MCF 10A (cell line): ENCODE measurements at regions of chr4 and their contacts with region 1.

Region 1: GRCh38 chr4:111631215-111631999 is 513.8 kb upstream of the FAM241A start:
- DNase-seq: peak; percentile 34
- H3K4me3 Mint-ChIP-seq: no peak overlapping the region
- H3K27ac Mint-ChIP-seq: no peak overlapping the region
- H3K4me1 Mint-ChIP-seq: no peaks in the 10 kb centered on the region
- H3K27me3 Mint-ChIP-seq: peaks cover 47% of the 10 kb centered on the region
- CTCF ChIP-seq: peak; percentile 29

Region 2: DNA sequence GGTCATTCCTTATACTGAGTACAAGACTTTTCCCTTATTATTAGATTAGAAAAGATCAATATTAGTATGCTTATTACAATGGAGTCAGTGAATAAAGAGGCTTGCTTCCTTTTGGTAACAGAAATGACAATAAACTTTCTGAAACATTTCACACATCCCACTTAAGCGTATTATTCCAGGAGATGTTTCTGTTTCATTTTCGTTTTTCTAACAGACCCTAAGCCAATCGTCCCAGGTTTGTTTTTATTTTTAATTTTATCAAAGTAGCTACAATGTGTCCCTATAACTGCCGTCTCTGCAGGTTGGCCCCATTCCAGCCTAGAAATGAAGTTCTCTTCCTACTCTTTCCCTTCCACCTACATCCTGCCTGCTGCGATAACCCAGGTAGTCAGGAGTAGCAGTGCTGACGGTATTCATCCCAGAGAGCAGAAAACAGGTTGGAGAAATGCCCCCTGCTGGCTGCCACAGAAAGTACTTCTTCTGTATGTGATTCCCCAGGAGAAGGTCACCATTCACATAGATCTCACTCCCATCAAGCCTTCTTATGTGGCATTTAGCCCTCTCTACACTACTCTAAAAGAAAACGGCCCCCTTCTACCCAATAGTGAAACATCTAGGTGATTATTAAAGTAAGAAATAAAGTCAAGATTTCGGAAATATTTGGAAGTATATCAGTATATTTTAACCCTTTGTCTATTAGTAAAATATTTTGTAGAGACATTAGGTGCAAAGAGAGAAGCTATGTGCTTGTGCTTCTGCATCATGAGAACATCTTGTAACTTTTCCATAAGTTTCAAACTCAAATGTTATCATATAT is 1115.1 kb before region 1 on chr4:
- CTCF ChIA-PET with region 1: interaction called, 3 read pairs
- POLR2A ChIA-PET with region 1: no interaction called
- intact Hi-C with region 1: loop called (anchors 5 kb)
- DNase-seq: peak; percentile 88
- H3K4me3 Mint-ChIP-seq: peak overlapping the region; percentile 80
- H3K27ac Mint-ChIP-seq: peak overlapping the region; percentile 75
- H3K4me1 Mint-ChIP-seq: no peaks in the 10 kb centered on the region
- H3K27me3 Mint-ChIP-seq: no peaks in the 10 kb centered on the region
- CTCF ChIP-seq: peak; percentile 56

Region 3: GRCh38 chr4:110631584-110632505 is 999.6 kb before region 1 on chr4:
- CTCF ChIA-PET with region 1: interaction called, 3 read pairs
- POLR2A ChIA-PET with region 1: no interaction called
- intact Hi-C with region 1: loop called (anchors 2 kb)
- DNase-seq: peak; percentile 87
- H3K4me3 Mint-ChIP-seq: peak overlapping the region; percentile 73
- H3K27ac Mint-ChIP-seq: no peak overlapping the region
- H3K4me1 Mint-ChIP-seq: peaks cover 7% of the 10 kb centered on the region
- H3K27me3 Mint-ChIP-seq: peaks cover 58% of the 10 kb centered on the region
- CTCF ChIP-seq: peak; percentile 80

Region 4: GRCh38 chr4:110878413-110878812 is 753.0 kb before region 1 on chr4:
- CTCF ChIA-PET with region 1: no interaction called
- POLR2A ChIA-PET with region 1: no interaction called
- intact Hi-C with region 1: no loop called
- DNase-seq: no peak
- H3K4me3 Mint-ChIP-seq: no peak overlapping the region
- H3K27ac Mint-ChIP-seq: no peak overlapping the region
- H3K4me1 Mint-ChIP-seq: no peaks in the 10 kb centered on the region
- H3K27me3 Mint-ChIP-seq: peaks cover 37% of the 10 kb centered on the region
- CTCF ChIP-seq: no peak

Region 5: GRCh38 chr4:110970642-110971041 is 660.8 kb before region 1 on chr4:
- CTCF ChIA-PET with region 1: interaction called, 3 read pairs
- POLR2A ChIA-PET with region 1: no interaction called
- intact Hi-C with region 1: loop called (anchors 5 kb)
- DNase-seq: peak; percentile 68
- H3K4me3 Mint-ChIP-seq: no peak overlapping the region
- H3K27ac Mint-ChIP-seq: no peak overlapping the region
- H3K4me1 Mint-ChIP-seq: no peaks in the 10 kb centered on the region
- H3K27me3 Mint-ChIP-seq: peaks cover 36% of the 10 kb centered on the region
- CTCF ChIP-seq: peak; percentile 42

Region 6: GRCh38 chr4:111136438-111136837 is 495.0 kb before region 1 on chr4:
- CTCF ChIA-PET with region 1: interaction called, 70 read pairs
- POLR2A ChIA-PET with region 1: interaction called, 5 read pairs
- intact Hi-C with region 1: loop called (anchors 1 kb)
- DNase-seq: peak; percentile 37
- H3K4me3 Mint-ChIP-seq: no peak overlapping the region
- H3K27ac Mint-ChIP-seq: no peak overlapping the region
- H3K4me1 Mint-ChIP-seq: no peaks in the 10 kb centered on the region
- H3K27me3 Mint-ChIP-seq: no peaks in the 10 kb centered on the region
- CTCF ChIP-seq: peak; percentile 34

Region 7: DNA sequence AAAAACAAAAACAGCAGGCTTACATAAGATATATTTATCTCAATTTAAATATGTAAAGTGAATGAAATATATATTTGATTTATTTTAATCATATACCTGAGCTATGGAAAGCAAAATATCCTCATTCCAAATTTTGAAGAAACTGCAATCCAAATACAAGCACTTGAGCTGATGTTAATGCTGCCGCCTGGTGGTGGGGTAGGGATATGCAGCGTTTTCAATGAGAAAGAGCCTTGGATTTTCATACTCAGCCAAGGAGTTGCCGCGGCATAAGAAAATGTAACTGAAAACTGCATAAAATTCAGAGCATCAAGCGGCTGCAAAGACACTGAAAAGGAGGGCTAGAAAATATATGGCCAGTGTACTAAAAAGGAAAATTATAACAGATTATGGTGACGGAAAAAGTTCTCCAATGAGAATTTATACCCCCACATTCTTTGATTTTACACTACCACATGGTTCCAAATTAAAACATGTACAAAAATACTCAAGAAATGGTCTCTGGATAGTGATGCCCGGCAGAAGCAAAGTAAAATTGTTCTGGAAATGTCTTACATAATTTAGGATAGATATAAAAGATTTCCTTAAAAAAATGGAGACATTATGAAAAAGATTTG is 348.2 kb before region 1 on chr4:
- CTCF ChIA-PET with region 1: interaction called, 8 read pairs
- POLR2A ChIA-PET with region 1: no interaction called
- intact Hi-C with region 1: loop called (anchors 5 kb)
- DNase-seq: peak; percentile 77
- H3K4me3 Mint-ChIP-seq: no peak overlapping the region
- H3K27ac Mint-ChIP-seq: no peak overlapping the region
- H3K4me1 Mint-ChIP-seq: no peaks in the 10 kb centered on the region
- H3K27me3 Mint-ChIP-seq: peaks cover 48% of the 10 kb centered on the region
- CTCF ChIP-seq: peak; percentile 81

Region 8: GRCh38 chr4:111854494-111855087 is 223.2 kb after region 1 on chr4:
- CTCF ChIA-PET with region 1: interaction called, 16 read pairs
- POLR2A ChIA-PET with region 1: no interaction called
- intact Hi-C with region 1: no loop called
- DNase-seq: peak; percentile 50
- H3K4me3 Mint-ChIP-seq: no peak overlapping the region
- H3K27ac Mint-ChIP-seq: no peak overlapping the region
- H3K4me1 Mint-ChIP-seq: no peaks in the 10 kb centered on the region
- H3K27me3 Mint-ChIP-seq: peaks cover 41% of the 10 kb centered on the region
- CTCF ChIP-seq: peak; percentile 68